Activated T-helper 1 cell treated with anti-CD3 and anti-CD28 coated beads, Interleukin-12 subunit alpha, Interleukin-12 subunit beta, Interleukin-2, Interleukin-4 antibody, amounts not matched to agents 30 ng/mL and 10 ng/mL and 1 ng/mL, durations not matched to agents 14 hours and 24 hours and 36 hours (primary cell): ENCODE measurements at regions of chr21 and their contacts with region 1.

Region 1: DNA sequence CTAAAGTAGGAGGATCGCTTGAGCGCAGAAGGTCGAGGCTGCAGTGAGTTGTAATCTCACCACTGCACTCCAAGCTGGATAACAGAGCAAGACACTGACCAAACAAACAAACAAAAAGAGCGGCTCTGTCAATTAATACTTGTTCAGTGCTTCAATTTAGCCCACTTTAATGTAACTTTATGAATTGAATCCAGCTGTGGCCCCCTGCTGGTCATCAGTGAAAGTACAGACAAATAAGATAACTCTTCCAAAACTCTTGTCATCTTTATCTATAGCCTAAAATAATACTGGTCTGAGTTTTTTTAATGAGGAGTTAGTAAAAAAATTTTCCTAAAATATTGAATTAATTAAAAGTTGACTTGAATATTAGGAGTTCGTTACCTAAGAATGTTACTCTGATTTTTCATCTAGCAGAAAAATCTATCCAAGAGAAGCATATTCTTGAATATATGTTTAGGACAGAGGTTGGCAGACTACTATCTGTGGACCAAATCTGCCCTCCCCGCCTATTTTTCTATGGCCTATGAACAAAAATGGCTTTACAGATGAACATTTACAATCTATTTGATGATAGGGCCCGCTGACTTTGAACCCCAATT is 26.1 kb downstream of the ATP5PF start:
- DNase-seq: peak; percentile 4
- H3K4me3 Mint-ChIP-seq: no peak overlapping the region
- H3K27ac Mint-ChIP-seq: no peak overlapping the region
- H3K4me1 Mint-ChIP-seq: no peaks in the 10 kb centered on the region
- H3K27me3 Mint-ChIP-seq: no peaks in the 10 kb centered on the region

Region 2: DNA sequence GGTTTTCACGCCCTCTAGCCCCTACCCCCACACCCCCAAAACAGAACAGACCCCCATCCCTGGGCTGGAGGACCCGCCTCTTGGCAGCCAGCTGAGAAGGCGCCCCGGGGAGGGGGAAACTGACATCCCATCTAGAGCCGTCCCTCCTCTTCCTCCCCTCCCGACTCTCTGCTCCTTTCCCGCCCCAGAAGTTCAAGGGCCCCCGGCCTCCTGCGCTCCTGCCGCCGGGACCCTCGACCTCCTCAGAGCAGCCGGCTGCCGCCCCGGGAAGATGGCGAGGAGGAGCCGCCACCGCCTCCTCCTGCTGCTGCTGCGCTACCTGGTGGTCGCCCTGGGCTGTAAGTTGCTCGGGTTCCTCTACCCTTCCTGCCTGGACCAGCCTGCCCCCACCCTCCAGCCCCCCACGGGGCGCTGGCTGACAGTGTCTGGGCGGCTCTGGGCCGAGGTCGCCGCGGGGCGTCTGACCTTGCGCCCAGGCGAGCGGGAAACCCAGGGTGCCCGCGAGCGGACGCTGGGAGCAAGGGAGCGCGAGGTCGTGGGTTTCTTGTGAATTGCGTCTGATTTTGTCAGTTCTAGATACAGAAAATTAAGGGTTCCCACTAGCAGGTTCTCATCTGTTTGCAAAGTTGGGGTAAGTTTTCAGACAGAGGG is 68.9 kb before region 1 on chr21:
- intact Hi-C with region 1: loop called (anchors 2 kb)
- DNase-seq: peak; percentile 10
- H3K4me3 Mint-ChIP-seq: peak overlapping the region; percentile 77
- H3K27ac Mint-ChIP-seq: no peak overlapping the region
- H3K4me1 Mint-ChIP-seq: peaks cover 32% of the 10 kb centered on the region
- H3K27me3 Mint-ChIP-seq: peaks cover 27% of the 10 kb centered on the region

Region 3: GRCh38 chr21:25682382-25682781 is 26.2 kb before region 1 on chr21:
- intact Hi-C with region 1: no loop called
- DNase-seq: no peak
- H3K4me3 Mint-ChIP-seq: no peak overlapping the region
- H3K27ac Mint-ChIP-seq: no peak overlapping the region
- H3K4me1 Mint-ChIP-seq: no peaks in the 10 kb centered on the region
- H3K27me3 Mint-ChIP-seq: peaks cover 2% of the 10 kb centered on the region